A549 (cell line): ENCODE measurements at regions of chr6 and their contacts with region 1.

Region 1: DNA sequence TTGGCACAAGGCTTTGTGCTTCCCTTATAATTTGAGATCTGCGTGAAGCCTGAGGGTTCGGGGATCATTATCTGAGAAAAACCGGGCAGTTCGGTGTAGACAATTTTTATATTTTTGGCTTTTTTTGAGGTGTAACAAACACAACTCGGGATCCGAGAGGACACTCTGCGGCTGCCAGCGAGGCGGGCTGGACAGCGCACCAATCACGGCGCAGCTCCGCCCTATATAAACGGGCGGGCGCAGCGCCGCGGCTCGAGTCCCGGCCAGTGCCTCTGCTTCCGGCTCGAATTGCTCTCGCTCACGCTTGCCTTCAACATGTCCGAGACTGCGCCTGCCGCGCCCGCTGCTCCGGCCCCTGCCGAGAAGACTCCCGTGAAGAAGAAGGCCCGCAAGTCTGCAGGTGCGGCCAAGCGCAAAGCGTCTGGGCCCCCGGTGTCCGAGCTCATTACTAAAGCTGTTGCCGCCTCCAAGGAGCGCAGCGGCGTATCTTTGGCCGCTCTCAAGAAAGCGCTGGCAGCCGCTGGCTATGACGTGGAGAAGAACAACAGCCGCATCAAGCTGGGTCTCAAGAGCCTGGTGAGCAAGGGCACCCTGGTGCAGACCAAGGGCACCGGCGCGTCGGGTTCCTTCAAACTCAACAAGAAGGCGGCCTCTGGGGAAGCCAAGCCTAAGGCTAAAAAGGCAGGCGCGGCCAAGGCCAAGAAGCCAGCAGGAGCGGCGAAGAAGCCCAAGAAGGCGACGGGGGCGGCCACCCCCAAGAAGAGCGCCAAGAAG is 69.0 kb downstream of the HFE start:
- DNase-seq: peak; percentile 78 to 83
- ATAC-seq: peak; percentile 59 to 70
- H3K4me3 ChIP-seq: peak overlapping the region; percentile 72
- H3K27ac ChIP-seq: peak overlapping the region; percentile 91 to 95
- H3K4me1 ChIP-seq: peaks cover 35% of the 10 kb centered on the region
- CTCF ChIP-seq: no peak
- EP300 ChIP-seq: no peak
- POLR2A ChIP-seq: peak; percentile 98
- RAD21 ChIP-seq: 0 out of 5 replicates have a peak, but pooled peaks of 1 of the 2 experiments have one; percentile 11

Region 2: DNA sequence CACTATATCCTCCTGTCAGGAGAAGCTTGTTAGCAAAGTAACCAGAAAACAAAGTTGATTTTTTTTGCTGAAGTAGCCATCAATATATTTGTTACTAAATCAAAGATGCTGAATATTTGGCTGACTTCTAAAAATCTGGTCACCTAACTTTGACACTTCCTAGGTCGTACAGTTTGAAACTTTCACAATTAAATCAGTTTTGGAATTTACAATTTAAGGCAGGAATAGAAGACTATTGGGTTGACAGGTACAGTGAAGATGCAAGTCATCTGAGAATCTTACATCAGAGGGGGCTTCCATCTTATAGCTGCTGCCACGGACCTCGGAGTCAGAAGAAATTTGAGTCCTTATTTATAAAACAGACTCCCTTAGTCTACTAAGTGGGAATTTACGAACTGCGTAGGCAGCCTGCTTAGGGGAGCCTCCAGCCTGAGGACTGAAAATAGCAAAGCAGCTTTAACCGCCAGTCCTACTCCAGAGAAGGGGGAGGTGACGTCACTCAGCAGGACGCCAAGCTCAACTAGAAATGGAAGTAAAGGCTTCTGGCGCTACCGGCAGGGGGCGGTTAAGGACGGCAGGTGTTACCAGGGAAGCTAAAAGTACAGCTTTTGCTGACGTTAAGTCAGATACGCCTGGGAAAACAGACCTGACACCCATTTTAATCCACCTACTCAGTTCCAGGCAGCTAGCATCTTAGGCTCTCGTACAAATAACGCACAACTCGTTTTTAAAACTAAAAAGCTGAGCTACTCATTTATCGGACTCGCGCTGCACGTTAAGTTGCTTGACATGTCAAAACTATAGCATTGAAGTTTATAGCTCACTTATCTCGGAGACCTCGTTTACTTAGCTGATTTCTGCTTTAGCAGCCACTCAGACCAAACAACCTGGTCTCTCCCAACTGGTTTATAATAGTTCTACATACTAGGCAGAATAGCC is 130.1 kb before region 1 on chr6:
- CTCF ChIA-PET with region 1: no interaction called
- POLR2A ChIA-PET with region 1: interaction called, 35 read pairs
- DNase-seq: peak; percentile 45 to 95
- ATAC-seq: peak; percentile 58 to 60
- H3K4me3 ChIP-seq: peak overlapping the region; percentile 69
- H3K27ac ChIP-seq: peak overlapping the region; percentile 95 to 100
- H3K4me1 ChIP-seq: peaks cover 52% of the 10 kb centered on the region
- CTCF ChIP-seq: peak; percentile 53
- EP300 ChIP-seq: no peak
- POLR2A ChIP-seq: peak; percentile 39; the same call in 1 of the 2 replicates
- RAD21 ChIP-seq: peak in 1 of 2 experiments; percentile 30; a peak in 2 of 5 replicates

Region 3: GRCh38 chr6:26045065-26045927 is 111.0 kb before region 1 on chr6:
- CTCF ChIA-PET with region 1: no interaction called
- POLR2A ChIA-PET with region 1: interaction called, 12 read pairs
- DNase-seq: peak; percentile 55 to 86
- ATAC-seq: peak; percentile 67 to 77
- H3K4me3 ChIP-seq: peak overlapping the region; percentile 40
- H3K27ac ChIP-seq: peak overlapping the region; percentile 81 to 89
- H3K4me1 ChIP-seq: 0 out of 3 replicates have a peak, but pooled peaks cover 11% of the 10 kb centered on the region
- CTCF ChIP-seq: no peak
- EP300 ChIP-seq: no peak
- POLR2A ChIP-seq: peak; percentile 83
- RAD21 ChIP-seq: no peak

Region 4: GRCh38 chr6:26122793-26123674 is 33.2 kb before region 1 on chr6:
- CTCF ChIA-PET with region 1: interaction called, 22 read pairs
- POLR2A ChIA-PET with region 1: interaction called, 350 read pairs
- DNase-seq: peak; percentile 77 to 99
- ATAC-seq: peak; percentile 72 to 73
- H3K4me3 ChIP-seq: peak overlapping the region; percentile 93
- H3K27ac ChIP-seq: peak overlapping the region; percentile 98
- H3K4me1 ChIP-seq: peaks cover 45% of the 10 kb centered on the region
- CTCF ChIP-seq: no peak
- EP300 ChIP-seq: peak; percentile 52 to 62; a peak in 3 of 5 replicates
- POLR2A ChIP-seq: peak; percentile 72
- RAD21 ChIP-seq: 0 out of 5 replicates have a peak, but pooled peaks of 1 of the 2 experiments have one; percentile 1

Region 5: DNA sequence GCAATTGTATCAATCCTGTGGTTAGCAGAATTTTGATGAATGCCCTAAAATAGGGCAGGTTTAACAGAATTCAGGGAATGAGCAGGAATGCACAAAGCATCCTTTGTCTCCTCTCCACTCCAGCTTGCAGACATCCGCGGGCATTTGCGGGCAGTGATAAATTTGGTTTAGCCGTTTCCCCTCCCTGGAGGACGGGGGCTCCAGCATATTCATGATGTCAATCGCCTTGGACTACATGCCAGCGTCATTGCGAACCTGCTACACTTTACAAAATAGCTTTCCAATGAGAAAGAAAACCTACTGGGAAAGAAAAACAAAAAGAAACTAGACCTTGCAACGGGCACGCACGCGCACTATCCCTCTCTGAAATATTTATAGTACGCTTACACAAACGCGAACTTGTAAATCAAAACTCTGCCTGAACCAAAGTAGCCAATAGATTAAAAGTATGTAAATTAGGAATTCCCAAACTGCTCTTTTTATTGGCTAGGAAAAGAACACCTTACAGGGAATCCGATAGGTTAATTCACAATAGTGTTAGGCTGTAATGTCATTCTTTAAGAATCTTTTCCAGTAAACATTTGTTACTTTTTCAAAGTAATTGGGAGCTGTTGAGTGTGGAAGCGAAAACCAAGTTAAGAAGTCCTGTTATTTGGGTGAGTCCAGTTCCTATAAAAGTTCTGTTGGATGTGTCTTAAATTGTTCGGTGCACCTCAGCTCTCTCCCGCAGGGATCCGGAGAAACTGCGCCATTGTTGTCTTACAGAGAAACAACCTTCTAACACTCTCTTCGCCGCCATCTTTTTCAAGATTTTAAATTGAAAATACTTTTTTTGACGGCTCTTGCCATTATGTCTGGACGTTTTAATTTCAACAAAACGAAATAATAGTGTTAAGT is 67.6 kb after region 1 on chr6:
- CTCF ChIA-PET with region 1: no interaction called
- POLR2A ChIA-PET with region 1: interaction called, 19 read pairs
- DNase-seq: peak; percentile 63 to 91
- ATAC-seq: peak; percentile 85 to 95
- H3K4me3 ChIP-seq: peak overlapping the region; percentile 60
- H3K27ac ChIP-seq: peak overlapping the region; percentile 93 to 95
- H3K4me1 ChIP-seq: peaks cover 8% of the 10 kb centered on the region; the same call in 2 of the 3 replicates
- CTCF ChIP-seq: no peak
- EP300 ChIP-seq: no peak
- POLR2A ChIP-seq: no peak
- RAD21 ChIP-seq: no peak

Region 6: GRCh38 chr6:26272171-26272637 is 115.9 kb after region 1 on chr6:
- CTCF ChIA-PET with region 1: no interaction called
- POLR2A ChIA-PET with region 1: interaction called, 20 read pairs
- DNase-seq: no peak
- ATAC-seq: no peak
- H3K4me3 ChIP-seq: peak overlapping the region; percentile 77; the same call in 1 of the 3 replicates
- H3K27ac ChIP-seq: peak overlapping the region; percentile 96 to 98
- H3K4me1 ChIP-seq: peaks cover 12% of the 10 kb centered on the region
- CTCF ChIP-seq: no peak
- EP300 ChIP-seq: no peak
- POLR2A ChIP-seq: no peak
- RAD21 ChIP-seq: no peak